ENCODE measurements at regions of chr5 and their contacts with region 1.

Region 1: GRCh38 chr5:15285901-15286583 is 213.9 kb upstream of the FBXL7 start:
- DNase-seq: peak in 4 of 10 donors; percentile 34 to 38 (median 36)
- H3K4me3 ChIP-seq: no peak overlapping the region
- H3K27ac ChIP-seq: peak overlapping the region in 14 of 59 donors; percentile 3 to 54 (median 27)
- H3K27me3 ChIP-seq: peaks cover 0 to 6% (median 0%) of the 10 kb centered on the region in 45 donors
- CTCF ChIP-seq: no peak

Region 2: GRCh38 chr5:15334551-15335266 is 48.7 kb after region 1 on chr5:
- intact Hi-C with region 1: no loop called
- DNase-seq: no peak
- H3K4me3 ChIP-seq: no peak overlapping the region
- H3K27ac ChIP-seq: no peak overlapping the region
- H3K27me3 ChIP-seq: no peaks in the 10 kb centered on the region
- CTCF ChIP-seq: no peak

Region 3: GRCh38 chr5:15499528-15500324 is 213.7 kb after region 1 on chr5 and contains the start of gene FBXL7:
- intact Hi-C with region 1: loop called in 1 of 2 experiments (anchors 10 kb)
- DNase-seq: peak; percentile 53 to 88 (median 71)
- H3K4me3 ChIP-seq: peak within 1 kb of the TSS; percentile 41 to 85 (median 72)
- H3K27ac ChIP-seq: peak within 1 kb of the TSS in 57 of 59 donors; percentile 24 to 93 (median 82)
- H3K27me3 ChIP-seq: peaks cover 0 to 38% (median 6%) of the 10 kb centered on the region in 45 donors
- CTCF ChIP-seq: peak in 49 of 56 donors; percentile 7 to 64 (median 41)
- total RNA-seq, gene FBXL7: 7.9 to 39.1 (median 15.8) TPM

Region 4: GRCh38 chr5:15821506-15821905 is 535.5 kb after region 1 on chr5:
- intact Hi-C with region 1: loop called in 1 of 2 experiments (anchors 10 kb)
- DNase-seq: no peak
- H3K4me3 ChIP-seq: no peak overlapping the region
- H3K27ac ChIP-seq: no peak overlapping the region
- H3K27me3 ChIP-seq: no peaks in the 10 kb centered on the region
- CTCF ChIP-seq: no peak

Region 5: DNA sequence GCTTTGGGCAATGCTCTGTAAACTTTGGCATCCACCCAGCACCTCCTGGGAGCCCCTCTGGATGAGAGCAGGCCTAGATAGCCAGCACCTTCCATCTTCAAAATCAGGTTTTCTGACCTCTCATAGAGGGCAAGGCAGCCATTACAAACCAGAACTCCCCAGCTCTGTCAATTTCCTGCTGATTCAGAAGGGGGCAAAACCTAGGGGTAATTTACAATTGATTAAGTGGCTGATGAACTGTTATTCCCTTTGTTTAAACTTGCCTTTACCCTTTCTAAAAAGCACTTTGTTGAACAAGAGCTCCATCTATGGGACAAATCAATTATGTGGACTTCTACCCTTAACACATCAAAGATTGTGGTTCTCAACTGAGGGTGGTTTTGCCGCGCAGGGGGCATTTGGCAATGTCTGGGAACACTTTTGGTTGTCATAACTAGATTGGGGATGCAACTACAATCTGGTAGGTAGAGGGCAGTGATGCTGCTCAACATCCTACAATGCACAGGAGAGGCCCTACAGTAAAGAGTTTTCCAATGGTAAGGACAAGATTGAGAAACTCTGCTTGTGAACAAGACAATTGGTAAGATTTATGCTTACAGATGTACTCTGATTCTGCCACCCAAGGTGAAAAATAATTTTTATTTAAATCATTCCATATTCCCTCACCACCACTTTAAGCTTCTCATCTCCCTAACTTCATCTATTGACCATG is 709.5 kb after region 1 on chr5:
- intact Hi-C with region 1: loop called in 1 of 2 experiments (anchors 5 kb)
- DNase-seq: peak in 1 of 10 donors; percentile 4
- H3K4me3 ChIP-seq: no peak overlapping the region
- H3K27ac ChIP-seq: no peak overlapping the region
- H3K27me3 ChIP-seq: no peaks in the 10 kb centered on the region
- CTCF ChIP-seq: peak in 52 of 56 donors; percentile 33 to 69 (median 50)

Measured in dorsolateral prefrontal cortex (tissue), 120 donors.